CD4-positive, alpha-beta memory T cell (primary cell): ENCODE measurements at regions of chr6 and their contacts with region 1.

Region 1: GRCh38 chr6:75296811-75297779 is 12.5 kb upstream of the TMEM30A start:
- DNase-seq: peak in 4 of 5 donors; percentile 46 to 58 (median 52)
- H3K4me3 ChIP-seq: no peak overlapping the region
- H3K4me3 Mint-ChIP-seq: no peak overlapping the region
- H3K27ac ChIP-seq: no peak overlapping the region
- H3K27ac Mint-ChIP-seq: no peak overlapping the region
- H3K4me1 ChIP-seq: no peaks in the 10 kb centered on the region
- H3K4me1 Mint-ChIP-seq: no peaks in the 10 kb centered on the region
- H3K27me3 ChIP-seq: no peaks in the 10 kb centered on the region
- H3K27me3 Mint-ChIP-seq: no peaks in the 10 kb centered on the region

Region 2: GRCh38 chr6:75526502-75527127 is 229.5 kb after region 1 on chr6:
- CTCF ChIA-PET with region 1: interaction called, 6 read pairs
- POLR2A ChIA-PET with region 1: no interaction called
- intact Hi-C with region 1: loop called (anchors 1 kb)
- DNase-seq: peak; percentile 58 to 63 (median 58)
- H3K4me3 ChIP-seq: no peak overlapping the region
- H3K4me3 Mint-ChIP-seq: no peak overlapping the region
- H3K27ac ChIP-seq: no peak overlapping the region
- H3K27ac Mint-ChIP-seq: no peak overlapping the region
- H3K4me1 ChIP-seq: no peaks in the 10 kb centered on the region
- H3K4me1 Mint-ChIP-seq: no peaks in the 10 kb centered on the region
- H3K27me3 ChIP-seq: no peaks in the 10 kb centered on the region
- H3K27me3 Mint-ChIP-seq: peaks cover 18 to 19% of the 10 kb centered on the region in 2 donors

Region 3: GRCh38 chr6:75563032-75563431 is 265.9 kb after region 1 on chr6:
- CTCF ChIA-PET with region 1: no interaction called
- POLR2A ChIA-PET with region 1: no interaction called
- intact Hi-C with region 1: loop called (anchors 1 kb)
- DNase-seq: peak in 4 of 5 donors; percentile 4 to 21 (median 10)
- H3K4me3 ChIP-seq: no peak overlapping the region
- H3K4me3 Mint-ChIP-seq: no peak overlapping the region
- H3K27ac ChIP-seq: no peak overlapping the region
- H3K27ac Mint-ChIP-seq: no peak overlapping the region
- H3K4me1 ChIP-seq: no peaks in the 10 kb centered on the region
- H3K4me1 Mint-ChIP-seq: no peaks in the 10 kb centered on the region
- H3K27me3 ChIP-seq: peaks cover 5% of the 10 kb centered on the region
- H3K27me3 Mint-ChIP-seq: peaks cover 25 to 26% of the 10 kb centered on the region in 2 donors